PC-9 (cell line): ENCODE measurements at regions of chr4 and their contacts with region 1.

Region 1: DNA sequence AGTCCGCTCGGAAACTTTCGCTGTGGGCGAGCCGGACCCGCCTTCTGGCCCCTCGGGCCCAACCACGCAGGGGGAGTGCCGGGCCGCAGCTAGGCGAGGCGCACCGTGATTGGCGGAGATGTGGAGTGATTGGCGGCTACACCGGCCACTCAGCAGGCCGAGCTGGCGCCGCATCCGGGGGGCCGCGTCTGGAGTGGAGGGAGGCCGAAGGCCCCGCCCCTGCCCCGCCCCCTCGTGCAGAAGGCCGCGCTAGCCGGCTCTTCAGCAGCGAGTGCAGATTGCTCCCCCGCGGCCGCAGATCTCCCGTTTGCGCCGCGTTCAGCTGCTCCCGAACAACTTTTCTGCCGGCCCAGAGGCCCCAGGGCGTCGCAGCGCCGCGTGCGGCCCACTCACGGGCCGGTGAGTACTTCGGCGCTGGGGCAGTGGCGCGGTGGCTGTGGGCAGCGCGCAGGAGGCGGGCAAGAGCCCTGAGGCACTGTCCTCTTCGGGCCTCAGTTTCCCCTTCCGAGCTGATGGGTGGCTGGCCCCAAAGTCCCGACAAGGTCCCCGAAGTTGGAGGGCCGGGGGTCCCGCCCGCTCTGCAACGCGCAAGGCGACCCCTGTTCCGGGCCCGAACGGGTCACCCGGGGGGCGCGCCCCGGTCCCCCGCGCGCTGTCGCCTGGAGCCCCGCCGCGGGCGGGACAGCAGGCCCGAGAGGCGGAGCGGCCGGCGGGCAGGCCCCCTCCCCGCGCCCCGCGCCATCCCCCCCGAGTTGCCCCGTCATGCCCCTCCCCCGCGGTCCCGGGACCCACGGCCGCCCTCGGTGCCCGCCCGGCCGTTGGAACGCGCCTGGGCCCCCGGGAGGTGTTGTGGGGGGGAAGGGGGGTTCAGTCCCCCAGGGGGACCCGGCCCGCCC is at the start of gene WFS1:
- DNase-seq: peak; percentile 90 to 99
- H3K4me3 ChIP-seq: peak within 1 kb of the TSS; percentile 81
- H3K27ac ChIP-seq: no peak within 1 kb of the TSS
- H3K4me1 ChIP-seq: peaks cover 40% of the 10 kb centered on the region
- H3K27me3 ChIP-seq: no peaks in the 10 kb centered on the region
- CTCF ChIP-seq: no peak
- total RNA-seq, gene WFS1: 53.7 and 57.1 TPM in 2 replicates

Region 2: GRCh38 chr4:6308899-6309643 is 39.2 kb after region 1 on chr4:
- CTCF ChIA-PET with region 1: no interaction called
- POLR2A ChIA-PET with region 1: no interaction called
- intact Hi-C with region 1: loop called (anchors 2 kb)
- DNase-seq: peak in 1 of 2 experiments; percentile 50
- H3K4me3 ChIP-seq: no peak overlapping the region
- H3K27ac ChIP-seq: no peak overlapping the region
- H3K4me1 ChIP-seq: peaks cover 10% of the 10 kb centered on the region
- H3K27me3 ChIP-seq: no peaks in the 10 kb centered on the region
- CTCF ChIP-seq: no peak

Region 3: DNA sequence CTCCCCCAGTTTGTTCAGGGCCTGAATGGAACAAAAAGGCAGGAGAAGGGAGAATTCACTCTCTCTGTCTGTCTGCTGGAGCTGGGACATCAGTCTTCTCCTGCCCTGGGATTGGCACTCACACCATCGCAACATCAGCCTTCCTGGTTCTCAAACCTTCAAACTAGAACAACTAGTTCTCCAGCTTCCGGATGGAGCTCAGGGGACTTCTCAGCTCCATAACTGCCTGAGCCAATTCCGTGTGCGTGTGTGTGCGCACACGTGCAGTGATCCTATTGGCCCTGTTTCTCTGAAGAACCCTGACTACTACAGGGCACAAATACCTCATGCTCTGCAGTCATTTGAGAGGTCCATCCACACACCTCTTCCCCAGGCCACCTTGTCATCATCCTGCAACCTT is 286.4 kb after region 1 on chr4:
- CTCF ChIA-PET with region 1: no interaction called
- POLR2A ChIA-PET with region 1: interaction called, 11 read pairs
- intact Hi-C with region 1: no loop called
- DNase-seq: peak; percentile 34 to 64
- H3K4me3 ChIP-seq: no peak overlapping the region
- H3K27ac ChIP-seq: no peak overlapping the region
- H3K4me1 ChIP-seq: peaks cover 7% of the 10 kb centered on the region; the same call in 1 of the 2 replicates
- H3K27me3 ChIP-seq: peaks cover 10% of the 10 kb centered on the region; the same call in 1 of the 2 replicates
- CTCF ChIP-seq: no peak

Region 4: DNA sequence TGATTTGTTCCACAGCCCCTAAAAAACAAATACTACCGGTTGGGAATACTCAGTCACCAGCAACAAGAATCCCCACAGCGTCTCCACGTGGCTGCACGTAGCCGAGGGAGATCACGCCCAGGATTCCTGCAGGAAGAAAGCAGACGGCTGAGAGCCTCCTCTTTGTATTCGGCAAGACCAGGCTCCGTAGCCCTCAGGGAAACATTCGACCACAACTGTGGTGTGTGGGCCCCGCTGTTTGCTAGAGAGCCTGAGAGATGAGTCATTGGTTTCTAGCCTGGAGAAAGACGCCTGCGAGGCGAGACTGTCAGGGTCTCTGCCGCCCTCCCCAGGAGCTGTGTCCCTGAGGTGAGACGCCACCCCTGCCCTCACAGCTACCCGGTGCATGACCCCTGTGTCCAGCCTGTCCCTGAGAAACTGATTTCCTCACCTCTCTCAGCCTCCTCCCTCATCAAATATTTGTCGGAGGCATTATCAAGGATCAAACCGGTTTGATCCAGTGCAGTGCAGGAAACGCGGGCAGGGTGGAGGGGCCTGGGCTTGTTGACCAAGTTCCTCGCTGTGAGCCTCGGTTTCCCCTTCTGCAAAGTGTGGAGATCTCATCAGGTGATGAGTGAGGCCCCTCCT is 419.1 kb after region 1 on chr4:
- CTCF ChIA-PET with region 1: no interaction called
- POLR2A ChIA-PET with region 1: no interaction called
- intact Hi-C with region 1: loop called (anchors 5 kb)
- DNase-seq: peak; percentile 94 to 98
- H3K4me3 ChIP-seq: peak overlapping the region; percentile 46; the same call in 1 of the 2 replicates
- H3K27ac ChIP-seq: peak overlapping the region; percentile 100
- H3K4me1 ChIP-seq: peaks cover 56% of the 10 kb centered on the region
- H3K27me3 ChIP-seq: no peaks in the 10 kb centered on the region
- CTCF ChIP-seq: no peak